BJ (cell line): ENCODE measurements at regions of chr11 and their contacts with region 1.

Region 1: DNA sequence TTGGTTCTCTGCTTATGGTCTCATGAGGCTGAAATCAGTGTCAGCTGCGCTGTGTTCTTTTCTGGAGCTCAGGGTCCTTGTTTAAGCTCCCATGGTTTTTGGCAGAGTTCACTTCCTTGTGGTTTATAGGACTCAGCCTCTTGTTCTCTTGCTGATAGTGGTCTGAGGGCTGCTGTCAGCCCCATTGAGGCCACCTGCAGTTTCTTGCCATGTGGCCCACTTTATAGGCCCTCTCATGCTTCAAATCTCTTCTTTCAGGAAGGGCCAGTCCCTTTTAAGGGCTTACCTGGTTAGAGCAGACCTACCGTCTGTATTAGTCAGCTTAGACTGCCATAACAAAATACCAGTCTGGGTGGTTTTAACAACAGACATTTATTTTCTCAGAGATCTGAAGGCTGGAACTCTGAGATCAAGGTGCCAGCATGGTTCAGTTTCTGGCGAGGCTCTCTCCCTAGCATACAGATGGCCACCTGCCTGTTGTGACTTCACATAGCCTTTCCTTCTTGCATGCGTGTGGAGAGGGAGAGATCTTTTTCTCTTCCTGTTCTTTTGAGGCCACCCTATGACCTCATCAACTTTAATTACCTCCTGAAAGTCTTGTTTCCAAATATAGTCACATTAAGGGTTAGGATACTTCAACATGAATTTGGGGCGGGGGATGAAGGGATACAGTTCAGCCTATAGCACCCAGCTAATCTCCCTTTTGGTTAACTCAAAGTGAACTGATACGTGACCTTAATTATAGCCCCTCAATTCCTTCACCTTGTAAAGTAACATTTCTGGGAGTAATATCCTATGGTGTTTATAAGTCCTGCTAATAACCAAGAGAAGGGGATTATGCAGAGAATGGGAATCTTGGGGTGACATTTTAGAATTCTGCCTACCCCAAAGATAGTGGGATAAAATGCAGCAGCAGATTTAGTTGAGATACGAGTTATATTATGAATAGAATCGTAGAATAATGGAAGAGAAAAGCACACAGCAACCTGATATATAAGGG is 131.8 kb downstream of the UVRAG start:
- DNase-seq: no peak
- H3K4me3 ChIP-seq: no peak overlapping the region
- H3K27me3 ChIP-seq: no peaks in the 10 kb centered on the region
- CTCF ChIP-seq: no peak

Region 2: GRCh38 chr11:75896843-75897419 is 49.9 kb before region 1 on chr11:
- CTCF ChIA-PET with region 1: no interaction called
- POLR2A ChIA-PET with region 1: interaction called, 13 read pairs
- DNase-seq: no peak
- H3K4me3 ChIP-seq: no peak overlapping the region
- H3K27me3 ChIP-seq: no peaks in the 10 kb centered on the region
- CTCF ChIP-seq: peak; percentile 53